Head of caudate nucleus (tissue), 42 donors: ENCODE measurements at regions of chr5 and their contacts with region 1.

Region 1: DNA sequence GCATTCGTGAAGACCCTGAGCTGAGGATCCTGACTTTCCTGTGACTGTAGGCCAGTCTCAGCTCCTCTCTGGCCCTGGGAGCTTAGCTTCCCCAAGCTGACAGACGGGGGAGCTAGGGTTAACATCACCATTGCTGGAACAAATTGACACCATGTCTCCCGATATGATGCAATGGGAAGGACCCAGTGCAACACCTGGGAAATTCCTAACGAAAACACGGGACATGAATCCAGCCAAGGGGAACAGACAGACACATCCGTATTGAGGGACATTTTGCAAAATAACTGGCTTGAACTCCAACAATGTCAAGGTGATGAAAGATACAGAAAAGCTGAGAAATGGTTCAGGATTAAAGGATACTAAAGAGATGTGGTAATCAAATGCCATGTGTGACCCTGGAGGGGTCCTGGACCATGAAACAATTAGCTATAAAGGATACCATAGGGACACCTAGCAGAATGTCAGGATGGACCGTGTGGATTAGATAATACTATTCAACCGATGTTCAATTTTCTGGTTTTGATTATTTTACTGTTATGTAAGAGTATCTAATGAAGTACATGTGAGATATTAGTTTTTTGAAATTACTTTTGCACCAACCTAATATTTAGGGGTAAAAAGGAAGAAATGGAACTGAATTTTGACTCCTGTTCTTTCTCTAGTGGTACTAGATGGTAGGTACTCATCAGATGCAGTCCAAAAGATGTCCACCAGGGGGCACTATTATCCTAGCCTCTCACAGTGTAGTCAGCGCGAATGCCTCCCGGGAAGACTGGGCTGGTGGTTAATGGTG is 52.7 kb downstream of the NDST1 start:
- DNase-seq: peak; percentile 43 to 98 (median 91)

Region 2: DNA sequence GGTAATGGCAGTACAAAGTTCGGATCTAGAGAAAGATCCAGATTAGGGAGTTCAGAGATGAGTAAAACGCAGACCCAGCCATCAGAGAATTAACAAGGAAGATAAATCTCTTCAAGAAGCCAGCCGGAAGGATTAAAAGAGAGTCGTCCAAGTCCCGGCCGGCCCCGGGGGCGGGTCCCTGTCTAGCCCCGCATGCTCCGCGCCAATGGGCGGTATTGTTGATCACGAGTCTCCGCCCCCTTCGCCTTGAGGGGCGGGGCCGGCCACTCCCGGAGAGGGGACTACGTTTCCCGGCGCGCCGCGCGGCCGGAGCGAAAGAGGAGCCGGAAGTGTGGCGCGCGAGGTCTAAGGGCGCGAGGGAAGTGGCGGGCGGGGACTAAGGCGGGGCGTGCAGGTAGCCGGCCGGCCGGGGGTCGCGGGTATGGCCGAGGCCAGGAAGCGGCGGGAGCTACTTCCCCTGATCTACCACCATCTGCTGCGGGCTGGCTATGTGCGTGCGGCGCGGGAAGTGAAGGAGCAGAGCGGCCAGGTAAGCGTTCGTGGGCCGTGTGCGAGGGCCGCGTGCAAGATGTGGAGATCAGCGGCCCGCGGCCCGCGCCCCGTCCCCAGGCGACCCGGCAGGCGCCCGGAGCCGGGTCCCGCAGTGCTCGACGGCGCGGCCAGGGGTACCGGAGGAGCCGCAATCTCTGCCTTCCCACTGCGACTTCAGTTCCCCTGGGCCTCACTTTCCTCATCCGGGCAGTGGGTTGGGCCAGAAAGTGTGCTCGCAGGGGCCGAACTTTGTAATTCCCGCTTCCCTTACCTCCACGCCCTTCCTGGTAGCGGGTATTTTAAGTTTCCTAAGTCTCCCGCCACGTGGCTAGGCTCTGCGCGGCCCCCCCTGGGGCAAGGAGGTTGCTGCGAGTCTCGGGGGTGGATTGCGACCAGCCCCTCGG is 203.0 kb before region 1 on chr5 and contains the start of gene TCOF1:
- intact Hi-C with region 1: no loop called
- DNase-seq: peak; percentile 94 to 99 (median 98)

Region 3: GRCh38 chr5:150511578-150512367 is 48.8 kb before region 1 on chr5:
- intact Hi-C with region 1: no loop called
- DNase-seq: peak in 41 of 42 donors; percentile 50 to 94 (median 80)

Region 4: GRCh38 chr5:150846654-150847333 is 286.2 kb after region 1 on chr5:
- intact Hi-C with region 1: loop called (anchors 5 kb)
- DNase-seq: peak in 27 of 42 donors; percentile 4 to 74 (median 39)